Dendritic cell treated with granulocyte-macrophage colony-stimulating factor and Interleukin-4, amounts not matched to agents 40 ng/mL and 50 ng/mL, for 4 days (primary cell): ENCODE measurements at regions of chrX and their contacts with region 1.

Region 1: GRCh38 chrX:9988762-9989161 is 21.6 kb downstream of the CLDN34 start:
- H3K4me3 Mint-ChIP-seq: no peak overlapping the region
- H3K27ac Mint-ChIP-seq: no peak overlapping the region
- H3K4me1 Mint-ChIP-seq: peaks cover 24% of the 10 kb centered on the region
- H3K27me3 Mint-ChIP-seq: no peaks in the 10 kb centered on the region

Region 2: GRCh38 chrX:9724713-9725112 is 264.0 kb before region 1 on chrX:
- intact Hi-C with region 1: loop called (anchors 10 kb)
- H3K4me3 Mint-ChIP-seq: no peak overlapping the region
- H3K27ac Mint-ChIP-seq: no peak overlapping the region
- H3K4me1 Mint-ChIP-seq: peaks cover 20% of the 10 kb centered on the region
- H3K27me3 Mint-ChIP-seq: peaks cover 4% of the 10 kb centered on the region

Region 3: DNA sequence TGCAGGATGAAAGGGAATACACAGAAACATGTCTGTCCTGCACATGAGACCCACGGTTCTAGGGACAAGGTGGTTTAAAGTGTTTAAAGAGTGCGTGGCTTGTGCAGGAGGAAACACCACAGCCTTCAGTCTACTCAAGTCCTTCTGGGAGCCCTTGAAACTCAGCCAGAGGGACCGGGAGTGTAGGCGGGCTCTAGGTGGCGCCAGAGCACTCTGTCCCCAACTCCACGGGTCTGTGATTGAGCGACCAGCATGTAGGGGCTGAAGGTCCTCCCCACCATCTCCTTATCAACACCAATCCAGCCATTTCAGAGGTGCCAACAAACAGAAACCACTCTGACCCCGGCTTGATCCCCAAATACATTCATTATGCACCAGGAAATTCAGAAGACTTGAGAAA is 103.6 kb before region 1 on chrX:
- intact Hi-C with region 1: loop called (anchors 2 kb)
- H3K4me3 Mint-ChIP-seq: no peak overlapping the region
- H3K27ac Mint-ChIP-seq: no peak overlapping the region
- H3K4me1 Mint-ChIP-seq: peaks cover 29% of the 10 kb centered on the region
- H3K27me3 Mint-ChIP-seq: peaks cover 12% of the 10 kb centered on the region